SK-N-SH (cell line): ENCODE measurements at regions of chr5 and their contacts with region 1.

Region 1: DNA sequence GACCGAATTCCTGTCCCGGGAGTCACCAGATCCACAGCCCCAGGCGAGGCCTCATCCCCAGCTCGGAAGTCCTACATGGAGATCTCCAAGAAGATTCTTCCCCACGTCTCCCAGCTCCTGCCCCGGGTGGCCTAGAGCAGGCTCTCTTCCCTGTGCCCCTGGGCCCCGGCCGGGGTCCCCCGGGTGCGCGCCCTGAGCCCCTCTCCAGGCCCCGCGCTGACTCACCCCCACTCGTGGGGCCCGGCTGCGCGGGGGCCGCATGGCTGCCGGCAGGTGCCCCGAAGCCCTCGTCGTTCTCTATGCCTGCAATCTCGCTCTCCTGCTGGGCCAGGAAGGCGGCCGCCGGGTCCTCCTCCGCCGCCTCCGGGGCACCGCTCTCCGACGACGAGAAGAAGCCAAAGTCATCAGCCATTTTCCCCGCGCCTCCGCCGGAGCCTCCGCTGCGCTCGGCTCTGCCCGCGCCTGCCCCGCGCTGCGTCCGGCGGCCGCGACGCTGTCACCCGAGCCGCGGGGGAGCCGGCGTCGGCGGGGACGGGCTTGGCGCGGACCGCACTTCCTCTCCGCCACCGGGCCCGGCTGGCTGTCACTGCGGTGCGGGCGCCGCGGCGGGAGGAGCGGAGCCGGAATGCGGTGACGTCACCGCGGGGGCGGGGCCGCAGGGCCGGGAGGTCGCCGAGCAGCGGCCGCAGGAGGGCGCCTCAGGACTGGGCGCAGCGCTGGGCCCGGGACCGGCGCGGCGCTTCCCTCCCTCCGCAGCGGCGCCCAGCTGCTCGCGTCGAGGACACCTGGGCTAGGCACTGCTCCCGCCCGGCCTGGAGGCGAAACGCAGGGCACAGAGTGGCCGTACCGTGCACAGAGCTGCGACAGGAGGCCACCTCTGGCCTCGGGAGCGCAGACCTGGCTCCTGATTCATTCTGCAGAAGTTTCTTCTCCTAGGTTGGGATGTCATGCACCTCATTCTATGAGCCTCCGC is at the start of gene CLTB:
- DNase-seq: peak; percentile 98
- H3K4me3 ChIP-seq: peak within 1 kb of the TSS; percentile 73 to 97
- H3K27ac ChIP-seq: peak within 1 kb of the TSS; percentile 12 to 70; a peak in 3 of 4 replicates
- H3K4me1 ChIP-seq: peaks cover 0 to 12% of the 10 kb centered on the region in 2 experiments; a peak in 2 of 4 replicates
- H3K27me3 ChIP-seq: no peaks in the 10 kb centered on the region
- CTCF ChIP-seq: peak; percentile 55
- EP300 ChIP-seq: no peak
- RAD21 ChIP-seq: peak; percentile 82
- polyA plus RNA-seq, gene CLTB: 85.9 and 91.2 TPM in 2 replicates

Region 2: DNA sequence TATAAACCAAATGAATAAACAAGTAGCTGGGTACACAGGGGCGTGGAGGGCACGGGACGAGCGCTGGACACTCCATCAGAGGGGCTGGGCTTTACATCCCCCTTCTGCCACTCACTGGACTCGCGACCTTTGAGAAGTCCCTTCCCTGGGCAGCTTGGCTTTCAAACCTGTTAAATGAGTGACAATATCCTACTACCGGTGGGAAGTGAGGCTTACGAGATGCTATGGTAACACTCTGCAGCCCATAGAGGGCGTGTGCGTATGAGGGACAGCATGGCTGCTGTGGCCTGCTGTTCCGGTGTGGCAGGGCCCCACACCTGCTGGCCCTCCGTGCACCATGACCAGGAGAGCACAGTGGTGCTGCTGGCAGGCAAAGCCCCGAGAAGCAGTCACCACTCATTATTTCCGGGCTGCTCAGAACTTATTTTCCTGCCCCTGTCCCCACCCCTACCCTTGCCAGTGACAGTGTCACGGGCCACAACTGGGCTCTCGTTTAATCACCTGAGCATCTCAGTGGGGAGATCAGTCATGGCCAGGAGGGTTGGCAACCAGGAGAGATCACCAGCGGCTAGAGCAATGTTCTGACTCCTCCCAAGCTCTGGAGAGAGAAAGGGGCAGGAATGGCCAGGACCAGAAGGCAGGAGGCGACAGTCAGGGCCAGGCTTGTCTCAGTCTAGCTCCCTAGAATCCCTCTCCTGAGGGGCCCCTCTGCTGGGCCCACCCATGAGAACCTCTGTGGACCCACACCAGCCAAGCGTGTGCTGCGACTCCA is 10.4 kb before region 1 on chr5:
- CTCF ChIA-PET with region 1: interaction called, 11 read pairs
- POLR2A ChIA-PET with region 1: no interaction called
- DNase-seq: peak; percentile 19
- H3K4me3 ChIP-seq: no peak overlapping the region
- H3K27ac ChIP-seq: no peak overlapping the region
- H3K4me1 ChIP-seq: no peaks in the 10 kb centered on the region
- H3K27me3 ChIP-seq: no peaks in the 10 kb centered on the region
- CTCF ChIP-seq: no peak
- EP300 ChIP-seq: no peak
- RAD21 ChIP-seq: no peak

Region 3: DNA sequence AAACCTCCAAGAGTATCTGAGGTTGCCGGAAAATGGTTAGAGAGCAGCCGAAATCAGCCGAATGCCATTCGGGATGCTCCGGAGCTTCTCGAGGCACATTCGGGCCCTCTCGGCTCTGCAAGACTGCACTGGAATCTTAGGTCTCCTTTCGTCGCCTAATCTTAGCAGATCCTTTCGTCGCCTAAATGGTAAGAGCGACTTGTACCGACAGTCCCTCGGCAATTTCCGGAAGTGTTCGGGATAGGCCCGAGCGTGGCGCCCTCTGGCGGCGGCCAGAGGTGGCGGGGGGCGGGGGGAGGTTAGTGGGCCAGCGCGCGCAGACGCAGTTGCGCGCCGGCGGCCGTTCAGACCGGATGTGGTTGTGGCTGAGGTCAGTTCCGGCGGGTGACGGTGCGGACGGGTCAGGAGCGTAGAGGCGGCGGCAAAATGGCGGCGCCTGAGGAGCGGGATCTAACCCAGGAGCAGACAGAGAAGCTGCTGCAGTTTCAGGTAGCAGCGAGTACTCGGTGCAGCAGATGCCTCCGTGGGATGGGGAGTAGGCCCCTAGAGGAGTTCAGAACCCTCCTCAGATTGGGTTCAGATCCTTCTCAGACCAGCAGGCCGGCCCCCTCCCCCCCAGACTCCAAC is 31.9 kb after region 1 on chr5 and contains the start of gene FAF2:
- CTCF ChIA-PET with region 1: interaction called, 47 read pairs
- POLR2A ChIA-PET with region 1: no interaction called
- DNase-seq: peak; percentile 99
- H3K4me3 ChIP-seq: peak within 1 kb of the TSS; percentile 88 to 93
- H3K27ac ChIP-seq: peak within 1 kb of the TSS; percentile 91 to 93
- H3K4me1 ChIP-seq: peaks cover 0 to 3% of the 10 kb centered on the region in 2 experiments; a peak in 2 of 4 replicates
- H3K27me3 ChIP-seq: no peaks in the 10 kb centered on the region
- CTCF ChIP-seq: peak; percentile 99
- EP300 ChIP-seq: no peak
- RAD21 ChIP-seq: no peak
- polyA plus RNA-seq, gene FAF2: 25.5 and 35.1 TPM in 2 replicates

Region 4: GRCh38 chr5:176537608-176538504 is 121.6 kb after region 1 on chr5:
- CTCF ChIA-PET with region 1: interaction called, 28 read pairs
- POLR2A ChIA-PET with region 1: interaction called, 6 read pairs
- DNase-seq: peak; percentile 90
- H3K4me3 ChIP-seq: peak overlapping the region; percentile 73 to 97
- H3K27ac ChIP-seq: peak overlapping the region; percentile 87 to 96
- H3K4me1 ChIP-seq: peaks cover 19 to 49% of the 10 kb centered on the region in 2 experiments; a peak in 3 of 4 replicates
- H3K27me3 ChIP-seq: no peaks in the 10 kb centered on the region
- CTCF ChIP-seq: no peak
- EP300 ChIP-seq: no peak
- RAD21 ChIP-seq: no peak

Region 5: DNA sequence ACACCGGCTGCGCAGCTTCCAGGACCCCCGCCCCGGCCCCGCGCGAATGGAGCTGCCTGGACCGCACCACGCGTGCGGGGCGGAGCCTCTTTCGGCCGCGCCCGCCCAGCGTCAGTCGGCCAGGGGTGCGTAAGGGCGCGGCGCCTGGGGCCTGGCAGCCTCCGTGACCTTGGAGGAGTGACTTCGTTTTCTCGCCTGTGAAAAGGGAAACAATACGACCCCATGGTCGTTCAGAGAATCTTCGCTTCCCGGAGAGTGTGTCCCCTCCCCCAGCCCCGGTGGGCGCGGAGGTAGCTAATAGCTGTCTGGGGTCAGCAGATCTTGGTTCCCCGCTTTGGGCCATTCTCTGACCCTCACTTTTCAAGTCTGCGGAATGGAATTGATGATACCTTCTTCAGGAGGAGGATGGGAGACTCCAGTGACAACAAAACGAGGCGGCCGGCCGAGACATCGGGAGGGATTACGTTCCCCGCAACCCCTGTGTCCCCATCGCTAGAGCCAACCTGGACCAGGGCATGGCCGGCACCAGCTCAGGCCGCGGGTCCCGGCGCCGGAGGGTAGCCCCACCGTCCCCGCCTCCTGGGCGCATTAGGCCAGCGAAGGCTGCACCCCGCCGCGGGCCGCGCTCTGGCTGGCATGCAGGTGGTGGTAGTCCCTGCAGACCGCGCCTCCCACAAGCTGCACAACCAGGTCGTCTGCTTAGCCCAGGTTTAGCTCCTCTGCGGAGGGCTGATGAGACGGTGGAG is 127.4 kb after region 1 on chr5:
- CTCF ChIA-PET with region 1: interaction called, 28 read pairs
- POLR2A ChIA-PET with region 1: interaction called, 6 read pairs
- DNase-seq: peak; percentile 89
- H3K4me3 ChIP-seq: peak overlapping the region; percentile 65 to 76
- H3K27ac ChIP-seq: peak overlapping the region in 1 of 2 experiments; percentile 72; a peak in 2 of 4 replicates
- H3K4me1 ChIP-seq: peaks cover 10 to 14% of the 10 kb centered on the region in 2 experiments; a peak in 2 of 4 replicates
- H3K27me3 ChIP-seq: no peaks in the 10 kb centered on the region
- CTCF ChIP-seq: no peak
- EP300 ChIP-seq: no peak
- RAD21 ChIP-seq: no peak

Region 6: DNA sequence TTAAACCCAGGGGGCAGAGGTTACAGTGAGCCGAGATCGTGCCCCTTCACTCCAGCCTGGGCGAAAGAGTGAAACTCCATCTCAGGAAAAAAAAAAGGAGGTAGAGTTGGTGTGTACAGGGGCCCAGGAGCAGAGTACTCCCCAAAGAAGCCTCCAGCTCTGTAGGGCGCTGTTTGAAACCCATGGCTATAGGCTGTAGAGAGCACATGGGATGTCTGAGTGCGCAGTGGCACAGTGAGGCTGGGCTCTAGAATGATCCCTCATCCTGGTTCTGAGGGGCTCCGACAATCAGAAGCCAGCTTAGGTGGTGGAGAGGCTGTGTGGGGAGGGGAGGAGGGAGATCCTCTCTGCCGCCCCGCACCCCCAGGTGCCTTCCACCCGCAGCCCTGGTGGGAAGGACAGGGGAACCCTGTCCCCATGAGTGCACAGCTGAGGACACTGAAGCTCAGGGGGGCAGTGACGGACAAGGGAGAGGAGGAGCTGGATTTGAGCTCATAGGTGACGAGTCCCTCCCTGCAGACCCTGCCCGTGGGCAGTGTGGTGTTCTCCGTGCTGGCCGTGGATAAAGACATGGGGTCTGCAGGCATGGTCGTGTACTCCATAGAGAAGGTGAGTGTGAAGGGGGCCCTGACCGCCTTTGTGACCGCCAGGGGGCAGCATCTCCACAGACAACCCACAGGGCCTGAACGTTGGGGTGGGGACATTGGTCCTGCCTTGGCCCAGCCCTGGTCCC is 157.5 kb after region 1 on chr5:
- CTCF ChIA-PET with region 1: interaction called, 16 read pairs
- POLR2A ChIA-PET with region 1: no interaction called
- DNase-seq: peak; percentile 94
- H3K4me3 ChIP-seq: no peak overlapping the region
- H3K27ac ChIP-seq: no peak overlapping the region
- H3K4me1 ChIP-seq: no peaks in the 10 kb centered on the region; a peak in 1 of 4 replicates
- H3K27me3 ChIP-seq: peaks cover 4% of the 10 kb centered on the region; the same call in 1 of the 2 replicates
- CTCF ChIP-seq: peak; percentile 85
- EP300 ChIP-seq: no peak
- RAD21 ChIP-seq: peak; percentile 85

Region 7: GRCh38 chr5:176619203-176619568 is 202.9 kb after region 1 on chr5:
- CTCF ChIA-PET with region 1: interaction called, 10 read pairs
- POLR2A ChIA-PET with region 1: no interaction called
- DNase-seq: peak; percentile 98
- H3K4me3 ChIP-seq: peak overlapping the region; percentile 29 to 57; a peak in 3 of 4 replicates
- H3K27ac ChIP-seq: no peak overlapping the region
- H3K4me1 ChIP-seq: peaks cover 6 to 26% of the 10 kb centered on the region in 2 experiments; a peak in 3 of 4 replicates
- H3K27me3 ChIP-seq: peaks cover 21% of the 10 kb centered on the region
- CTCF ChIP-seq: peak; percentile 59
- EP300 ChIP-seq: no peak
- RAD21 ChIP-seq: peak; percentile 79